Activated CD4-positive, alpha-beta memory T cell treated with anti-CD3 and anti-CD28 coated beads for 36 hours (primary cell): ENCODE measurements at regions of chr3 and their contacts with region 1.

Region 1: GRCh38 chr3:31754575-31755278 is 222.0 kb downstream of the STT3B start:
- DNase-seq: peak; percentile 25
- H3K4me3 Mint-ChIP-seq: no peak overlapping the region
- H3K27ac Mint-ChIP-seq: peak overlapping the region; percentile 94
- H3K4me1 Mint-ChIP-seq: peaks cover 46% of the 10 kb centered on the region
- H3K27me3 Mint-ChIP-seq: no peaks in the 10 kb centered on the region

Region 2: DNA sequence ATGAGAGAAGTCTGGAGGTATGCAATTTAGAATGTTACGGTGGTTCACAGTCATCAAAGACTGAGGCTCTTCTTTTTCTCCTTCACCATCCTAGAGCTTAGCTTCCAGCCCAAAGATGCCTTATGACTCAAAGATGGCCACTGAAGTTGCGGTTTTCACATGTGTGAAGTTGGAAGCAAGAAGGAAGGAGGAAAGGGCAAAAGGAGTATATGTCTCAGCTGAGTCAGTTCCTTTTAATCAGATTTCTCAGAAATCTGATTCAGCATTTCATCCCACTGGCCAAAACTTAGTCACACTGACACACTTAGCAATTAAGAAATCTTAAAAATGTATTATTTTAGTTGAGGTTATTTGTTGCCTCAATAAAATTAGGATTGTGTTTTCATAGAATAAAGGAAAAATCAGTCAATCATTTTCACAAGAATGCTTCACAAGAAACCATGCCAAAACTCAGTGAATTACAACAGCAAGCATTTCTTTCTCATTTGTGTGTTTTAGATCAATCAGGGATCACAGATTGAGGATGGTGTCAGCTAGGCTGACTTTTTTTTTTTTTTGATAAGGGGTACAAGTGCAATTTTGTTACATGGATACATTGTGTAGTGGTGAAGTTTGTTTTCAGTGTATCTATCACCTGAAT is 649.2 kb before region 1 on chr3:
- CTCF ChIA-PET with region 1: no interaction called
- POLR2A ChIA-PET with region 1: no interaction called
- intact Hi-C with region 1: loop called (anchors 1 kb)
- DNase-seq: peak; percentile 51
- H3K4me3 Mint-ChIP-seq: no peak overlapping the region
- H3K27ac Mint-ChIP-seq: no peak overlapping the region
- H3K4me1 Mint-ChIP-seq: peaks cover 37% of the 10 kb centered on the region
- H3K27me3 Mint-ChIP-seq: no peaks in the 10 kb centered on the region

Region 3: DNA sequence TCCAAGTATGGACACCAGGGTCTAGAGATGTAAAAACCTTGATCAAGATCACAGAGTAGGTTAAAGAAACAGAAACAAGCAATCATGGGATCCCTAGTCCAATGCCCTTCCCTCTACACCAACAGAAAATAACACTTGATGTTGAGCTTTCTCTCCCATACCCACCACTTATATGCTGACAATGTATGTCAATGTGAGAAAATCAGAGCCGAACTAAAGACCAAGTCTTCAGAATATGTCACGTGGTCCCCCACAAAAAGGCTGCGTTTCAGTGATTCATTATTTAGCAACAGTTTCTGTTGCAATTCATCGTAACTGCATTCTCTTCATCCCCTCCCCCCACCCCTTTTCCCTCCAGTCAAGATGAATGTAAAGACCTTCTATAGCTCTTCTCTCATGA is 500.9 kb before region 1 on chr3:
- CTCF ChIA-PET with region 1: no interaction called
- POLR2A ChIA-PET with region 1: no interaction called
- intact Hi-C with region 1: loop called (anchors 1 kb)
- DNase-seq: peak; percentile 62
- H3K4me3 Mint-ChIP-seq: peak overlapping the region; percentile 30
- H3K27ac Mint-ChIP-seq: peak overlapping the region; percentile 96
- H3K4me1 Mint-ChIP-seq: peaks cover 62% of the 10 kb centered on the region
- H3K27me3 Mint-ChIP-seq: no peaks in the 10 kb centered on the region

Region 4: GRCh38 chr3:31567036-31567435 is 187.7 kb before region 1 on chr3:
- CTCF ChIA-PET with region 1: no interaction called
- POLR2A ChIA-PET with region 1: no interaction called
- intact Hi-C with region 1: loop called (anchors 5 kb)
- DNase-seq: peak; percentile 35
- H3K4me3 Mint-ChIP-seq: no peak overlapping the region
- H3K27ac Mint-ChIP-seq: no peak overlapping the region
- H3K4me1 Mint-ChIP-seq: peaks cover 84% of the 10 kb centered on the region
- H3K27me3 Mint-ChIP-seq: no peaks in the 10 kb centered on the region

Region 5: DNA sequence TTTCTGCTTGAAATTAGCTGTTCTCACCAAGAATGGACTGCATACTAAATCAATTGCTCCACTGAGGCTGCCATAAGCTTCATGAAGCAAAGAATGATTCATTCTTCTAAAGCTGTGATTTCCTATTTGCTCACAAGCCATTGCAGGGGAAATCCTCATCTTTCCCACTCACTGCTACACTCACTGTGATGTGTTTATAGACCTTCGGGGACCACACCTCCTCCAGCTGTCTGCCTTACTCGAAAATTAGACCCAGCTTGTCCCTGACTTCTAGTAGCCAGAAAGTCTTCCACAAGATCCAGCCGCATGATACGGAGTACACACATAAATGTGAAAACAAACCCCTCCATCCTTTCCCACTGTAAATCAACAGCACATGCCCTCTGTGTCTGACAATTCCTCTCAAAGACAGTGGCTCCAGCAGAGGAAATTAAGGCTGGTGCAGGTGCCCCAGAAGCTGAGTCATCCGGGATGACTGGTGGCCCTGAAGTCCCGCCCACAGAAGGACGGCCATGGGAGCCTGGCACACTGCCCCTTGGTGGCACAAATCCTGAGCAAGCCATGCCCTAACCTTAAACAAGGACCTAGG is 50.0 kb before region 1 on chr3:
- CTCF ChIA-PET with region 1: no interaction called
- POLR2A ChIA-PET with region 1: interaction called, 3 read pairs
- intact Hi-C with region 1: loop called (anchors 2 kb)
- DNase-seq: peak; percentile 64
- H3K4me3 Mint-ChIP-seq: peak overlapping the region; percentile 43
- H3K27ac Mint-ChIP-seq: peak overlapping the region; percentile 63
- H3K4me1 Mint-ChIP-seq: peaks cover 6% of the 10 kb centered on the region
- H3K27me3 Mint-ChIP-seq: peaks cover 16% of the 10 kb centered on the region

Region 6: DNA sequence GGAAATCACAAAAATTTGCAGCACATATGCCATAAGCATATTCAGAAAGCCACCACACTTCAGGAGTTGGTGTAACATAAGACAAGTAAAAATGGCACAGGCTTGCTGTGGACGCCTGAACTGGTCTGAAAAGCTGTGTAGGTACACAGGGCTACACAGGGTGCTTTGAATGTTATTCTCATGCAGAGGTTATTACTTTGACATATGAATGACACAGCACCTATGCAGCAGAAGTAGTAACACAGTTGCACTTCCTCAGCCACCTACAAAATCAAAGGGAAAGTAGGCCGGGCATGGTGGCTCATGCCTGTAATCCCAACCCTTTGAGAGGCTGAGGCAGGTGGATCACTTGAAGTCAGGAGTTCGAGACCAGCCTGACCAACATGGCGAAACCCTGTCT is 171.8 kb after region 1 on chr3:
- CTCF ChIA-PET with region 1: no interaction called
- POLR2A ChIA-PET with region 1: no interaction called
- intact Hi-C with region 1: loop called (anchors 2 kb)
- DNase-seq: no peak
- H3K4me3 Mint-ChIP-seq: no peak overlapping the region
- H3K27ac Mint-ChIP-seq: peak overlapping the region; percentile 26
- H3K4me1 Mint-ChIP-seq: peaks cover 23% of the 10 kb centered on the region
- H3K27me3 Mint-ChIP-seq: no peaks in the 10 kb centered on the region

Region 7: GRCh38 chr3:32117324-32117723 is 362.6 kb after region 1 on chr3:
- CTCF ChIA-PET with region 1: no interaction called
- POLR2A ChIA-PET with region 1: no interaction called
- intact Hi-C with region 1: loop called (anchors 1 kb)
- DNase-seq: no peak
- H3K4me3 Mint-ChIP-seq: no peak overlapping the region
- H3K27ac Mint-ChIP-seq: no peak overlapping the region
- H3K4me1 Mint-ChIP-seq: peaks cover 54% of the 10 kb centered on the region
- H3K27me3 Mint-ChIP-seq: no peaks in the 10 kb centered on the region